Breast epithelium (tissue), 4 donors: ENCODE measurements at regions of chr12 and their contacts with region 1.

Region 1: DNA sequence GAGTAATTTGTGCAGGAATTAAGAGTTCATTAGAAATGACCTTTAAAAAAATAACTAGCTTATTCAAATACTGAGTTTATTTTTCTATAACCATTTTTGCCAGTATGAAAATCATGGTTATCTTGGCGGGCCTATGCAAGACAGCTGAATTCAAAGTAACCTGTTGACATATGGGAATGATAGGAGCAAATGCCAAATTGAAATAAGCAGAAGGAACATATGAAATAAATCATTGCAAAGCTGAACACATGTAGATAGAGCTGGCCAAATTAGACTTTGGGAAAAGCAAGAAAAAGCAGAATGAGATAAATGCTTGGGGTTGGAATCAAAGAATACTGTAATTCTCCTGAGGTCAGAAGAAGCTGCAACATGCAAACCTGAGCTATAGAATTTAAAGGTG is 372.5 kb downstream of the ADAMTS20 start:
- DNase-seq: no peak
- H3K4me3 ChIP-seq: no peak overlapping the region
- H3K27ac ChIP-seq: no peak overlapping the region
- H3K4me1 ChIP-seq: no peaks in the 10 kb centered on the region
- H3K27me3 ChIP-seq: no peaks in the 10 kb centered on the region
- CTCF ChIP-seq: no peak
- POLR2A ChIP-seq: no peak

Region 2: GRCh38 chr12:43104524-43104923 is 75.0 kb before region 1 on chr12:
- intact Hi-C with region 1: loop called (anchors 5 kb)
- DNase-seq: no peak
- H3K4me3 ChIP-seq: no peak overlapping the region
- H3K27ac ChIP-seq: no peak overlapping the region
- H3K4me1 ChIP-seq: no peaks in the 10 kb centered on the region
- H3K27me3 ChIP-seq: no peaks in the 10 kb centered on the region
- CTCF ChIP-seq: no peak
- POLR2A ChIP-seq: no peak

Region 3: GRCh38 chr12:43167691-43168090 is 11.8 kb before region 1 on chr12:
- intact Hi-C with region 1: loop called (anchors 1 kb)
- DNase-seq: no peak
- H3K4me3 ChIP-seq: no peak overlapping the region
- H3K27ac ChIP-seq: no peak overlapping the region
- H3K4me1 ChIP-seq: no peaks in the 10 kb centered on the region
- H3K27me3 ChIP-seq: no peaks in the 10 kb centered on the region
- CTCF ChIP-seq: no peak
- POLR2A ChIP-seq: no peak